Activated naive CD4-positive, alpha-beta T cell treated with anti-CD3 and anti-CD28 coated beads for 36 hours (primary cell): ENCODE measurements at regions of chr3 and their contacts with region 1.

Region 1: GRCh38 chr3:132722164-132723024 is at the start of gene NPHP3:
- DNase-seq: peak; percentile 98
- H3K4me3 Mint-ChIP-seq: peak within 1 kb of the TSS; percentile 86
- H3K27ac Mint-ChIP-seq: peak within 1 kb of the TSS; percentile 73
- H3K4me1 Mint-ChIP-seq: peaks cover 34% of the 10 kb centered on the region
- H3K27me3 Mint-ChIP-seq: no peaks in the 10 kb centered on the region
- total RNA-seq, gene NPHP3: 11.4 to 11.6 TPM

Region 2: DNA sequence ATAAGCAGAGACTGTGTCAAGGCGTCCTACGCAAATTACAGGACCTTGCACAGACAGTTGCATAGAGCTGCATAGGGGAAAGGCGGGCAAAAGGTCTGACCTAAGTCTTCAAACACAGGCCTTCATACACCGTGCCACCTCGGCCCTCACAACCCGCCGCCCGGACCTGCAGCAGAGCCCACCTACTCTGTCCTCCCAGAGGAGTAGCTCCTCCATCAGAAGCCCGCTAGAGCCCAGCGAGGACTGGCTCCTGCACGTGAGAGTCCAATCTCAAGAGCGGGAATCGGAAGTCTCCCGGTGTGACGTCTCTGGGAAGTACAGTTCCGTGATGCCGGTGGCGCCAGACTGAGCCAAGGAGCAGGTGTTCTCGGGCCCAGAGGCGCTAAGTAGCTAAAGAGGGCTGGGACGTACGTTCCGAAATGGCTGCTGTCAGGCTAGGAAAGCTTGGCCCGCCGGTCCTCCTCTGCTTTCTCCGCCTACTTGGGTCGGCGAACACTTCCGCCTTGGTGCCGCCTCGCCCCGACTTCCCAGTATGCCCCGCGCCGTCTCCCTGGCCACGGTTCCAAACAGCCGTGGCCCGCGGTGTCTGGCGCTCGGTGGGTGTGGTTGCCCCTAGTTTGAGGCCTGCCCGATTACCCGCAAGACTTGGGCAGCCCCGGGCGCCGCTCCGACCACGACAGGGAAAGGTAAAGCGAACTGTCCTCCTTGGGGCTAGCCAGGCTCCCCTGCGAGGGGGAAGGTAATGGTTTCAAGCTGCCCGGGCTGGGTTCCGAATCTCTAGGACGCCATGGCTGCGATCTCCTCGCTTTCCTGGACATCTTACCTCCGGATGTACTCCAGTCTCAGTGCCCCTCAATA is 1695.8 kb before region 1 on chr3 and contains the starts of genes ASTE1 and NEK11:
- CTCF ChIA-PET with region 1: no interaction called
- intact Hi-C with region 1: loop called (anchors 10 kb)
- DNase-seq: peak; percentile 92
- H3K4me3 Mint-ChIP-seq: peak within 1 kb of the TSS; percentile 92
- H3K27ac Mint-ChIP-seq: peak within 1 kb of the TSS; percentile 94
- H3K4me1 Mint-ChIP-seq: peaks cover 42% of the 10 kb centered on the region
- H3K27me3 Mint-ChIP-seq: no peaks in the 10 kb centered on the region
- total RNA-seq, gene ASTE1: 10.8 to 11.2 TPM
- total RNA-seq, gene NEK11: 1.1 to 1.9 TPM

Region 3: DNA sequence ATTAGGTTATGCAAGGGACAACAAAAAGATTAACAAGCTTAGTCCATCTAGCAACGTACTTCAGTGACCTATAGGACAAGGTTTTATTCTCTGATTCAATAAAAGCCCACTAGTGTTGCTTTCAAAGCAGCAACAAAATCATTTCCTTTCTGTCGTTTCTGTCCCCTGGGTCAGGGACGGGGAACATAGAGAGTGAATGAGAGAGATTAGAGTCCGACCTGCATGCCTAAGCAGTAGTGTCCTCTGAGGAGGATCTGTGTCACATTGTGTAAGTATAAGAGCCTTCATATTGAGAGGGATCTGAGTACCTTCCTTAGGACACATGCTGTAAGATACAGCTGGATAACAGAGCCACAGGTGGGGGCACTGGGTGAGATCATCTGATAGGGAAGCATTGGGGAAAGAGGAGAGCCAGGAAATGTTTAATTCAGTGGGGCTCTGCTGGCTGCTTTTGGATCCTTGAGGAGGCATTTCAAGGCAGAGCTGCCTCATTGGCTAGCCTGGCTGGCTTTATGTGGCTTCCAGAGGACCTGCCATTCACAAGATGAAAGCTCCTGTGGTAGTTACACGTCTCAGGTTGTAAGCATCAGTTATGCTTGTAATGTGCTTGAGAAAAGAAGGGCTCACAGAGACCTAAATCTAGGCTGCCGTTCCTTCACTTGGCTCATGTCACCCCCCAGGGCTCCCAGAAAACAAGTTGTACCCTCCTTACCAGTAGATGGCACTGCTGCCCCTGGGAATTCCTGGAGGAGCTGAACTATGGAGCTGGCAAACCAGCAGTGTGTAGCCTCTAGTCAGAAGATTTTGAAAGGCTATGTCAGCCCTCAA is 318.5 kb after region 1 on chr3:
- CTCF ChIA-PET with region 1: interaction called, 6 read pairs
- intact Hi-C with region 1: loop called (anchors 2 kb)
- DNase-seq: peak; percentile 63
- H3K4me3 Mint-ChIP-seq: no peak overlapping the region
- H3K27ac Mint-ChIP-seq: no peak overlapping the region
- H3K4me1 Mint-ChIP-seq: no peaks in the 10 kb centered on the region
- H3K27me3 Mint-ChIP-seq: peaks cover 40% of the 10 kb centered on the region

Region 4: GRCh38 chr3:133384331-133385027 is 662.1 kb after region 1 on chr3:
- CTCF ChIA-PET with region 1: interaction called, 19 read pairs
- intact Hi-C with region 1: loop called (anchors 1 kb)
- DNase-seq: peak; percentile 65
- H3K4me3 Mint-ChIP-seq: no peak overlapping the region
- H3K27ac Mint-ChIP-seq: no peak overlapping the region
- H3K4me1 Mint-ChIP-seq: no peaks in the 10 kb centered on the region
- H3K27me3 Mint-ChIP-seq: no peaks in the 10 kb centered on the region

Region 5: DNA sequence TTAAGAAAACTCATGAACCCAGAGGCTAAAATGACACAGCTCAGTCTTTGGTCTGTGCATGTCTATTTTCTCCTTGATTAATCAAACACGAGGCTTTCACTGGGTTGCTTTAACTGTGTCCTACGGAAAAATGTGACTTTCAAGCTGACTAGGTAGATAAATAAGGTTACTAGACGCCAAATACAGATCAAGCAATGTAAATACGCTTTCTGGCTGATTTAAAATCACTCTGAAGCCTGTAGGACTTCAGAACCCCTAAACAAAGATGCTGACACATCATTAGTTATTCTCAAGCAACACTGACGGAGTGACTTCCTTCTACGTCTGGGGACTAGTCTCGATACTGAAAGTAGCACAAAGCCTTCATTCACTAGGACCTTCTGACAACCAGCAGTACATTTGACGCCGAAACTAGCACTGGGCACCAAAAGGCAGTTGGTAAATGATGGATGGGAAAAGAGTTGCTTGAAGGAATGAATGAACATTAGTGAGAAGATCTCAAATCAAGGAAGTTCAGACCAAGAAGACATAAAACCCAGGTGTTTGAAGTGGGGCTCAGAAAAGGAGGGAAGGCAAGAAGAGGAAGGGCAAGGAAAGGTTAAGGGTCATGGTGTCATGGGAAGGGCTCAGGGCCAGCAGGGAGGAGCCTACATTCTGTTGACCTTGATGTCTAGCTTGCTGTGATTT is 784.0 kb after region 1 on chr3:
- CTCF ChIA-PET with region 1: no interaction called
- intact Hi-C with region 1: loop called (anchors 1 kb)
- DNase-seq: peak; percentile 59
- H3K4me3 Mint-ChIP-seq: peak overlapping the region; percentile 54
- H3K27ac Mint-ChIP-seq: peak overlapping the region; percentile 67
- H3K4me1 Mint-ChIP-seq: peaks cover 11% of the 10 kb centered on the region
- H3K27me3 Mint-ChIP-seq: no peaks in the 10 kb centered on the region

Region 6: GRCh38 chr3:133805527-133806475 is 1083.4 kb after region 1 on chr3 and contains the start of gene SRPRB:
- CTCF ChIA-PET with region 1: no interaction called
- intact Hi-C with region 1: loop called (anchors 1 kb)
- DNase-seq: peak; percentile 98
- H3K4me3 Mint-ChIP-seq: peak within 1 kb of the TSS; percentile 93
- H3K27ac Mint-ChIP-seq: peak within 1 kb of the TSS; percentile 94
- H3K4me1 Mint-ChIP-seq: peaks cover 37% of the 10 kb centered on the region
- H3K27me3 Mint-ChIP-seq: no peaks in the 10 kb centered on the region
- total RNA-seq, gene SRPRB: 55.0 to 56.8 TPM